ENCODE measurements at regions of chr9 and their contacts with region 1.

Region 1: GRCh38 chr9:128296337-128297220 is 20.5 kb downstream of the SWI5 start:
- DNase-seq: no peak
- CTCF ChIP-seq: no peak

Region 2: DNA sequence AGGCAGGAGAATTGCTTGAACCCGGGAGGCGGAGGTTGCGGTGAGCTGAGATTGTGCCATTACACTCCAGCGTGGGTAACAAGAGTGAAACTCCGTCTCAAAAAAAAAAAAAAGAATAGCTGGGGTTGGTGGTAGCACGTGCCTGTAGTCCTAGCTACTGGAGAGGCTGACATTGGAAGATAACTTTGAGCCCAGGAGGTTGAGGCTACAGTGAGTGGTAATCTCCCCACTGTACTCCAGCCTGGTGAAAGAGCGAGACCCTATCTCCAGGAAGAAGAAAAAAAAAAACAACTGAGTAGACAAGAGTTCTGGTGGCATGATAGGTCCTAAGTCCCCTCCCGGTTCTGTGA is 47.0 kb before region 1 on chr9:
- CTCF ChIA-PET with region 1: no interaction called
- POLR2A ChIA-PET with region 1: no interaction called
- DNase-seq: no peak
- CTCF ChIP-seq: no peak

Region 3: GRCh38 chr9:128275996-128276573 is 20.5 kb before region 1 on chr9 and contains the starts of genes GOLGA2 and SWI5:
- CTCF ChIA-PET with region 1: interaction called, 12 read pairs
- POLR2A ChIA-PET with region 1: no interaction called
- DNase-seq: peak; percentile 100
- CTCF ChIP-seq: no peak

Region 4: GRCh38 chr9:128310461-128310860 is 13.9 kb after region 1 on chr9:
- CTCF ChIA-PET with region 1: interaction called, 31 read pairs
- POLR2A ChIA-PET with region 1: interaction called, 9 read pairs
- DNase-seq: no peak
- CTCF ChIP-seq: no peak

Region 5: DNA sequence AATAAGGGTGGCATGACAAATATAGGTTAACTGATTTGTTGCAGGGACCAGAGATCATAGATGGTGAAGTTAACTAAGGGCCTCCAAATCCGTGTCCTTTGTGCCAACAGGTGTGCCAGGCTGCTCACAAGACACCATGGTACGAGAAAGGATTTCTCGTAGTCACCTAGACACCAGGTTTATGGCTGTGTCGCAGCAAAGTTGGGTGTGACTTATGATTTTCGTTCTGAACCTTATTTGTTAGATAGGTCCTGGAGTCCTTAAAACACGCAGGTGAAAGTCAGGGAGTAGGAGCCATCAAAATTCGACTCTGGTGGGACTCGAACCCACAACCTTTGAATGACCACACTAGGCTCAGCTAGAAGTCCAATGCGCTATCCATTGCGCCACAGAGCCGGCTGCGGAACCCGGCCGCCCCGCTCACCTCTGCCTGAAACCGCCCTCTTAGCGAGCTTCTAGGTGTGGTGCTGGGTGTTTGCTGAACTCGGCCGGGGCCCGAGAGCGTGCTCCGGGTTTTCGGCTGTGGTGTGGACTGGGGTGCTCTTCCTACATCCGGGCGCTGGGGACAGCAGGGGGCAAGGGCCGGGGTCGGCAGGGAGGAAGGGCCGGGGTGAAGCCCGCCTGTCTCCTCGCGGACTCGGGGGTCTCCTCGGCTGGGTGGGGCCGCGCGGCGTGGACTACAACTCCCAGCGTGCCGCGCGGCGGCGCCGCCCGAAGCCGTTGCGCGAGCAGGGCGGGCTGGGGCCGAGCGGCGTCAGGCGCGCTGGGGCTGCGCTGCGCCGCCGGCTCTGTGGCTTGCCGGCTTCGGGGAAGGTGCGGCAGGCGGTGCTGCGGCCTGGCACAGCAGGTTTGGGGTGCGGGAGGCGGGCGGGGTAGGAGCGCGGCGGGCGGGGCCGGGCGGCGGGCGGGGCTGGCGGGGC is 43.5 kb after region 1 on chr9 and contains the start of gene SLC27A4:
- CTCF ChIA-PET with region 1: interaction called, 14 read pairs
- POLR2A ChIA-PET with region 1: no interaction called
- DNase-seq: peak; percentile 90
- CTCF ChIP-seq: no peak

Region 6: GRCh38 chr9:129597355-129598088 is 1300.9 kb after region 1 on chr9:
- CTCF ChIA-PET with region 1: no interaction called
- POLR2A ChIA-PET with region 1: no interaction called
- DNase-seq: peak; percentile 76
- CTCF ChIP-seq: no peak